ENCODE measurements at regions of chr1 and their contacts with region 1.

Region 1: GRCh38 chr1:225735252-225736149 is 42.1 kb upstream of the SRP9 start:
- H3K4me3 ChIP-seq: no peak overlapping the region
- H3K27ac ChIP-seq: no peak overlapping the region
- H3K4me1 ChIP-seq: peaks cover 17% of the 10 kb centered on the region
- CTCF ChIP-seq: 0 out of 2 replicates have a peak, but pooled peaks have one; percentile 16

Region 2: GRCh38 chr1:225635649-225636048 is 99.9 kb before region 1 on chr1:
- CTCF ChIA-PET with region 1: no interaction called
- POLR2A ChIA-PET with region 1: no interaction called
- H3K4me3 ChIP-seq: no peak overlapping the region
- H3K27ac ChIP-seq: no peak overlapping the region
- H3K4me1 ChIP-seq: peaks cover 12% of the 10 kb centered on the region
- CTCF ChIP-seq: no peak

Region 3: GRCh38 chr1:225746361-225747179 is 11.1 kb after region 1 on chr1:
- CTCF ChIA-PET with region 1: interaction called, 5 read pairs
- POLR2A ChIA-PET with region 1: interaction called, 27 read pairs
- H3K4me3 ChIP-seq: peak overlapping the region; percentile 3
- H3K27ac ChIP-seq: peak overlapping the region; percentile 35
- H3K4me1 ChIP-seq: no peaks in the 10 kb centered on the region
- CTCF ChIP-seq: peak; percentile 51; the same call in 1 of the 2 replicates

Measured in HEK293 (cell line).